Tibial artery (tissue), 4 donors: ENCODE measurements at regions of chr3 and their contacts with region 1.

Region 1: GRCh38 chr3:21752749-21753347 is 1.8 kb upstream of the ZNF385D start:
- DNase-seq: peak in 1 of 2 donors; percentile 26
- H3K4me3 ChIP-seq: no peak overlapping the region
- H3K27ac ChIP-seq: no peak overlapping the region
- H3K4me1 ChIP-seq: peaks cover 0 to 29% (median 3%) of the 10 kb centered on the region in 4 donors
- H3K27me3 ChIP-seq: no peaks in the 10 kb centered on the region
- CTCF ChIP-seq: peak; percentile 61 to 81

Region 2: DNA sequence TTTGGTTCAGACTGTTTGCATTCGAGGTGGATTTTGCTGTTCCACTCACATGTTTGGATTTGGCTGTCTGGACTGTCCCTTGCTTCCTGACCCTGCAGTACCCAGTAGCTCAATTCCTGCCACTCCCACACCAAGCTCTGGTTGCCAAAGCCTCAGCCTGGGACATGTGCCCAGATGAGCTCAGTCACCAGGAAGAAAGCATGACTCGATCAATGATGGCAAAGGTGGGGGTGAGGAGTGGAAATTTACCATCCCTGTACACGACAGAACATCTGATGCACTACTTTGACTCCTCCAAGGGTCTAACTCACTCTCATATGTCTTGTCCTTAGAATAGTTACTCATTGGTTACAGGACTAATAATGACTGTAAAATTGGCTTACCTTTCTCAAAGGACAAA is 47.1 kb before region 1 on chr3:
- intact Hi-C with region 1: no loop called
- DNase-seq: peak; percentile 57 to 92
- H3K4me3 ChIP-seq: no peak overlapping the region
- H3K27ac ChIP-seq: peak overlapping the region; percentile 36 to 42
- H3K4me1 ChIP-seq: peaks cover 0 to 33% (median 6%) of the 10 kb centered on the region in 4 donors
- H3K27me3 ChIP-seq: no peaks in the 10 kb centered on the region
- CTCF ChIP-seq: no peak

Region 3: GRCh38 chr3:21894459-21895340 is 141.9 kb after region 1 on chr3:
- intact Hi-C with region 1: loop called (anchors 5 kb)
- DNase-seq: no peak
- H3K4me3 ChIP-seq: no peak overlapping the region
- H3K27ac ChIP-seq: no peak overlapping the region
- H3K4me1 ChIP-seq: peaks cover 0 to 19% (median 0%) of the 10 kb centered on the region in 4 donors
- H3K27me3 ChIP-seq: no peaks in the 10 kb centered on the region
- CTCF ChIP-seq: peak; percentile 61 to 66